Activated CD4-positive, alpha-beta memory T cell treated with anti-CD3 and anti-CD28 coated beads for 36 hours (primary cell): ENCODE measurements at regions of chr9 and their contacts with region 1.

Region 1: GRCh38 chr9:130682490-130683121 is 11.0 kb upstream of the EXOSC2 start:
- DNase-seq: peak; percentile 71
- H3K4me3 Mint-ChIP-seq: peak overlapping the region; percentile 89
- H3K27ac Mint-ChIP-seq: no peak overlapping the region
- H3K4me1 Mint-ChIP-seq: peaks cover 5% of the 10 kb centered on the region
- H3K27me3 Mint-ChIP-seq: peaks cover 6% of the 10 kb centered on the region

Region 2: DNA sequence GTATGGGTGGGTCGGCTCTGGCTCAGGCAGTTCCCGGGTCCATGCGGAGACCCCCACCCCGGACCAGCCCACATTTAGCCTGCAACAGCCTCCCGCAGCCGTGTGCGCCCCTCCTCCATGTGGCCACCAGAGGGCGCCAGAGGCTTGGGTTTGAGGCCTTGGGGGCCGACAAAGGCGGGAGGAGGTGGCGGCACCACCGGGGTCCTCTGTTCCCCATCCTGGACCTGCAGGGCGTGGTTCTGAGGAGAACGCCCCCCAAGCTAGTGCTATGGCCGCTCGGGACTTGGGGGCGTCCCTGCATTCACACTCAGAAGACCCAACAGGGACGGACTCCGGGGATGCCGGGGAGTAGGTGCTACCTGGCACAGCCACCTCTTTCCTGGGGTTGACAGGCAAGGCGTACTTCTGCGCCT is 221.4 kb before region 1 on chr9:
- CTCF ChIA-PET with region 1: interaction called, 158 read pairs
- POLR2A ChIA-PET with region 1: no interaction called
- intact Hi-C with region 1: loop called (anchors 1 kb)
- DNase-seq: peak; percentile 74
- H3K4me3 Mint-ChIP-seq: no peak overlapping the region
- H3K27ac Mint-ChIP-seq: no peak overlapping the region
- H3K4me1 Mint-ChIP-seq: no peaks in the 10 kb centered on the region
- H3K27me3 Mint-ChIP-seq: peaks cover 17% of the 10 kb centered on the region

Region 3: GRCh38 chr9:130578865-130579737 is 103.5 kb before region 1 on chr9 and contains the start of gene FUBP3:
- CTCF ChIA-PET with region 1: interaction called, 3 read pairs
- POLR2A ChIA-PET with region 1: no interaction called
- intact Hi-C with region 1: loop called (anchors 5 kb)
- DNase-seq: peak; percentile 95
- H3K4me3 Mint-ChIP-seq: peak within 1 kb of the TSS; percentile 85
- H3K27ac Mint-ChIP-seq: peak within 1 kb of the TSS; percentile 90
- H3K4me1 Mint-ChIP-seq: peaks cover 40% of the 10 kb centered on the region
- H3K27me3 Mint-ChIP-seq: no peaks in the 10 kb centered on the region
- total RNA-seq, gene FUBP3: 31.8 to 37.5 TPM

Region 4: GRCh38 chr9:130693426-130694191 is 11.0 kb after region 1 on chr9 and contains the start of gene EXOSC2:
- CTCF ChIA-PET with region 1: interaction called, 45 read pairs
- POLR2A ChIA-PET with region 1: interaction called, 10 read pairs
- intact Hi-C with region 1: no loop called
- DNase-seq: peak; percentile 99
- H3K4me3 Mint-ChIP-seq: peak within 1 kb of the TSS; percentile 90
- H3K27ac Mint-ChIP-seq: peak within 1 kb of the TSS; percentile 86
- H3K4me1 Mint-ChIP-seq: peaks cover 47% of the 10 kb centered on the region
- H3K27me3 Mint-ChIP-seq: no peaks in the 10 kb centered on the region
- total RNA-seq, gene EXOSC2: 77.3 to 80.5 TPM

Region 5: GRCh38 chr9:130701056-130702022 is 18.7 kb after region 1 on chr9:
- CTCF ChIA-PET with region 1: interaction called, 20 read pairs
- POLR2A ChIA-PET with region 1: interaction called, 3 read pairs
- intact Hi-C with region 1: no loop called
- DNase-seq: peak; percentile 76
- H3K4me3 Mint-ChIP-seq: no peak overlapping the region
- H3K27ac Mint-ChIP-seq: no peak overlapping the region
- H3K4me1 Mint-ChIP-seq: peaks cover 20% of the 10 kb centered on the region
- H3K27me3 Mint-ChIP-seq: no peaks in the 10 kb centered on the region